HEK293T (cell line): ENCODE measurements at regions of chr15 and their contacts with region 1.

Region 1: DNA sequence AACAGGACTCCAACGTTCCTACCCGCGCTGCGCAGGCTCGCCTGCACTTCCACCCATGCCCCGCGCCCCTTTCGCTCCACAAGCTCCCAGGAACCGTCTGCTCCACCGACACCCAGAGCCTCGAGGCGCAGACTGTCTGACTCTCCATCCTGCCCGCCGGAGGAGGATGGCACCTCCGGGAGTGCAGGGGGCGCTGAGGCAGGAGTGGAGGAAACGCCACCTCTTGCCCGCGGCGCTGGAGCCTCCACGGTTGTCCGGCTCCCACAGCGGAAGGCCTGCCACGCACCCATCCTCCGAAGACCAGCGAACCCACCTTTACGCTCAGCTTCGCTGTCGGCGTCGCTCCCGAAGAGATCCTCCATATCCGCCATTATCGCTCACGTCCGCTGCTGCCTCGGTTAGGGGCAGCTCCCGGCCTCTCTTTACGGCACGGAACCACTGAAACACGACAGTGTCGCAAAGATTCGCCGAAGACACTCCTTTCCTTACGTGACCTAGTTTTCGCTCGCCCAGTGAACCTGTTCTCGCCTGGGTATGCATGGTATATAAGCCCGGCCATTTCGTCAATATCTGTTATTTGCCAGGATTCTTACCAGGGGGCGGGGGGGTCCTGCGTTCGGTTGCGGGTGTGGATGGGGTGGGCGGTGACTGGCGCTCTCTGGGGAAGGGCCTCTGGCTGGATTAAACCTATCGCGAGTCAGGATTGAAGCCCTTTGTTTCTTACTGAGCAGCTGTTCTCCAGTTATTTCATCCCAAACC is at the start of gene LEO1:
- DNase-seq: peak; percentile 85

Region 2: GRCh38 chr15:51982013-51982769 is 10.6 kb after region 1 on chr15:
- CTCF ChIA-PET with region 1: no interaction called
- POLR2A ChIA-PET with region 1: interaction called, 18 read pairs
- DNase-seq: peak; percentile 16

Region 3: GRCh38 chr15:52031566-52031965 is 60.0 kb after region 1 on chr15:
- CTCF ChIA-PET with region 1: no interaction called
- POLR2A ChIA-PET with region 1: no interaction called
- DNase-seq: no peak